Activated naive CD4-positive, alpha-beta T cell treated with anti-CD3 and anti-CD28 coated beads, Interleukin-2, amount 10 ng/mL, durations not matched to agents 7 days and 5 days (primary cell): ENCODE measurements at regions of chr6 and their contacts with region 1.

Region 1: DNA sequence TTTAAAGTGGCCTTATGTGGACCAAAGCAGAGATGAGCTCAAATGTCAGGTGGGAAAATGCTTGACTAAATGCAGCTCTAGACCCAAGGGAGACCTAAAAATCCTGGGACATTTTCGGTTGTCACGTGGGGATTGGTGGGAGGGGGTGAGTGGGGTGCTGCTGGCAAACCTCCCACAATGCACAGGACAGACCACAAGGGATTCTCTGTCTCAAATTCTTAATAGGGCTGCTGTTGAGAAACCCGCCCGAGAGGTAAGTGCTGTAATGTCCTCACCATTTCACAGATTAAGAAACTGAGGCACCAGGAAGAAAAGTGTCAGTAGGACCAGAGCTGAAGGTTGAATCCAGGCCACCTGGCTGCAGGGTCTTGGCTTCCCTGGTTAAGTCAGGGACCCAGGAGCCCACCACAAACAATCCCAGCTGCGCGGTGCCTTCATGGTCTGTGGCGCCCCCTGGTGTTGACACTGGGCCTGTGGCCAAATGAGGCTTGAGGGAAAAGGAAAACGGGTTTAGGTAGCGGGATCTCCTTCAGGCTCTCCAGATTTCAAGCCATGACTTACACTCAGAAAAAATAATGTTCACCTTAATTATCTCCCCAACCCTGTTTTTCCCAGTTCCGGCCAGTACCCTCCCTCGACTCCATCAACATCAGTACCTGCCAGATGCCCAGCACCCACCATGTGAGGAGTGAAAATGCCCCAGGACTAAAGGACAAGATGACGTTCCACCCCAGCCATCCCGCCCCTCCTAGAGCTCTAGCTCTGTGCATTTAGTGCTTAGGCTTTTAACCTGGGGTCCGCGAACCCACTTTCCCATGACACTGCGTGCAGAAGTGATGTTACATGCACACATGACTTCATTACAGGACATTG is 7.2 kb downstream of the HLA-G start:
- DNase-seq: peak; percentile 70
- H3K4me3 Mint-ChIP-seq: no peak overlapping the region
- H3K27ac Mint-ChIP-seq: no peak overlapping the region
- H3K4me1 Mint-ChIP-seq: peaks cover 8% of the 10 kb centered on the region
- H3K27me3 Mint-ChIP-seq: peaks cover 66% of the 10 kb centered on the region

Region 2: GRCh38 chr6:29720863-29721262 is 113.9 kb before region 1 on chr6:
- CTCF ChIA-PET with region 1: interaction called, 14 read pairs
- DNase-seq: peak; percentile 55
- H3K4me3 Mint-ChIP-seq: no peak overlapping the region
- H3K27ac Mint-ChIP-seq: no peak overlapping the region
- H3K4me1 Mint-ChIP-seq: peaks cover 35% of the 10 kb centered on the region
- H3K27me3 Mint-ChIP-seq: peaks cover 11% of the 10 kb centered on the region

Region 3: DNA sequence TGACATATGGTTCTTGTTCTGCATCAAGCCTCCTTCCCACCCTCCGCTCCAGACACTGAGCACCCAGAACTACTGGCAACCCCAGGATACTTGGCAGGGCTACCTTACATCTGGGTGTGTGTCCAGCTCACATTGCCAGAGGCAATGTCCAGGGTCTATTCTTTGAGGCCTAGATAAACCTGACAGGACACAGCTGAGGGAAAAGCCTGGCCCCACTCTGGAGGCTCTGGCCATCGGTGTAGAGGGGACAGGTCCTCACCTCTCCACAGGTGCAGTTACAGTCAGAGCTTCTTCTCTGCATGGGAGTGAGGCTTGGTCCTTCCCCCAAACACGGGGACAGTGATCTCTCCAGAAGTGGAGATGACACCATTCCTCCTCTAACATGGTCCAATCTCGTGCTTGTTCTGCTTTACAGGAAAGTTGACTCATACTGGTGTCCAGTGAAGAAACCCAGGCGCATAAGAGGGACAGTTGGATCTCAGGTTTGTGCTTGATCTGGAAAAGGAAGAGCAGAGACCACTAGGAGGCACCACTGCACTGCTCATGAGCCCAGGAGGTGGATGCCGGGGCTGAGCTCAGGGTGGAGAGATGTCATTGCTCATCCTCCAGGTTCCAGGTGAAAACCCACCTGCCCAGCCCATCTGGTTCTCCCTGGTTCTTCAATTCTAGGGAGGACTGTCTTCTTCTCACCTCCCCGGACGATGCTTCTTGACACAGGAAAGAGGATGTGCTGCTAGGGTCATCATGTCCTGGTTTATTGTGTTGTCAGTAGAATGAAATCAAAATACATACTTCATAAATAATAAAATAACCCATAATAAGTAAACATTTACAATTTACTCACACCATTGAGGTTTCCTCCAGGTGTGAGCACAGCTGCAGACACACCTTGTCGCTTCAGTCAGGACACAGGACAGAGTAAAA is 96.8 kb before region 1 on chr6:
- CTCF ChIA-PET with region 1: interaction called, 46 read pairs
- DNase-seq: peak; percentile 85
- H3K4me3 Mint-ChIP-seq: no peak overlapping the region
- H3K27ac Mint-ChIP-seq: no peak overlapping the region
- H3K4me1 Mint-ChIP-seq: peaks cover 11% of the 10 kb centered on the region
- H3K27me3 Mint-ChIP-seq: no peaks in the 10 kb centered on the region

Region 4: DNA sequence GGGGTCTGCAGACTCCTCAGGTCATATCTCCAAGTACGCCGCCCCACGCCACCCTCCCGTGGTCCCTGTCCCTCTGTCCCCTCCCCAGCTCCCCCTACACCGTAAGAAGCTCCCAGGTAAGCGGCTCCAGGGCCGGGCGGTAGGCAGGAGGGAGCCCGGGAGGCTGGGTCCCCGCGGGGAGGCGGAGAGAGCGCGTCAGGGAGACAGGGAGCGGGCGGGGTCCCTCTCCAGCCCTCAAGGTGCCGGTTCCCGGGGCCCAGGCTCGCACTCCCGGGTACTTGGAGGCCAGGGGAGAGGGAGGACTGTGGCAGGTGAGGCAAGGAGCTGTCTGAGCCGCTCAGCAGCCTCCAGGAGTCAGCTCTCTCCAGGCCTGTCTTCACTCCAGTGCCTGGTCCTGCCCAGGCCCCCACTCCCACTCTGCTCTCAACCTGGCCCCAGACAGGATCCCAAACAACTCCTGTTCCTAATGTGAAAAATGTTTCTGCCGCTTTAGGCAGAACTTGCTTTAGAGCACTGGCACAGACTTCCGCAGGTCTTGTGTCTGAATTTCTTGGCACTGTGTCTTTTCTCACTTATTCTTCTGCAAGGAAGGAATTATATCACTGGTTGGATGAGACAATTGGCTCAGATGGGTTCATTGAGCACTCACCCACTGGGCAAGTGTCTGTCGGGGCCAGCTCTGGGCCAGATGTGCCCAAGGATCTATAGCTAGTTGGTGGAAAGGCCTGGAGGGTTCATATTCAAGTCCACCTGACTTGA is 29.4 kb after region 1 on chr6:
- CTCF ChIA-PET with region 1: no interaction called
- DNase-seq: no peak
- H3K4me3 Mint-ChIP-seq: no peak overlapping the region
- H3K27ac Mint-ChIP-seq: no peak overlapping the region
- H3K4me1 Mint-ChIP-seq: no peaks in the 10 kb centered on the region
- H3K27me3 Mint-ChIP-seq: peaks cover 69% of the 10 kb centered on the region